RWPE1 (cell line): ENCODE measurements at regions of chr3 and their contacts with region 1.

Region 1: DNA sequence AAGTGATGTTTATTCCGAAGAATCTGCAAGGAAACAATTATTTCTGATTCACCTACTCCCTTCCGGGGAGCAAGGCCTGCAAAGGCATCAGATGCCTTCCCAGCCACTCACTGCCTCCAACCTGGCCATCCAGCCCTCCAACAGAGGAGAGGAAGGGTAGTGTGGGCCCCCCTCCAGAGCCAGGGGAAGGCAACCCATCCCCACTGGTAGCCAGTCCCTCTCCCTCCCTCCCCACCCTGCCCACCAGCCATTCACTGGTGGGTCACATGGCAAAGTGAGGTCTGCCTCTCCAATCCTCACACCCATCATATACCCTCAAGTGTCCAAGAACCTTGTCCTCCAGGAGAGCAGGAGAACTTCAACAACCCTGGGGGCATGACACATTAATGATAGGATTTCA is 2.4 kb upstream of the VIPR1 start:
- DNase-seq: no peak
- H3K27ac ChIP-seq: no peak overlapping the region
- CTCF ChIP-seq: no peak

Region 2: GRCh38 chr3:42403737-42404136 is 96.4 kb before region 1 on chr3:
- CTCF ChIA-PET with region 1: no interaction called
- POLR2A ChIA-PET with region 1: no interaction called
- DNase-seq: peak; percentile 19
- H3K27ac ChIP-seq: no peak overlapping the region
- CTCF ChIP-seq: no peak

Region 3: GRCh38 chr3:42468111-42468510 is 32.0 kb before region 1 on chr3:
- CTCF ChIA-PET with region 1: no interaction called
- POLR2A ChIA-PET with region 1: no interaction called
- DNase-seq: no peak
- H3K27ac ChIP-seq: no peak overlapping the region
- CTCF ChIP-seq: no peak

Region 4: GRCh38 chr3:42519568-42519962 is 19.5 kb after region 1 on chr3:
- CTCF ChIA-PET with region 1: no interaction called
- POLR2A ChIA-PET with region 1: no interaction called
- DNase-seq: no peak
- H3K27ac ChIP-seq: no peak overlapping the region
- CTCF ChIP-seq: no peak

Region 5: DNA sequence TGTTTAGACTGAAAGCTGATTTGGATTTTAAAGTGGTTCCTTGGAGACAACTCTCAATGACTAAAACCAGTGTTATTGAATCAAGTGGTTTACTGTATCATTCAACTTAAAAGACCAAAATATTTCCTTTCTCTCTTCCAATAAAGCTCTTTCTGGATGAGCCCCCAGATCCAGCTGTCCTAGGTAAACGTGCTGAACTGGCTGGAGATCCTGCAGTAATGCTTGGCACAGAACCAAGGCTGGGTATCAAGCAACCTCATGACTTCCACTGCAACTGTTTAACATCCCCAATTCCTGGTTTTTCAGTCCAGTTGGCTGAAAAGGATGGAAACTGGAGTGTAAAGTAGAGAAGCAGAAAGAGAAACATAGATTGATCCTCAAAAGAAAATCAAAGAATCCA is 52.7 kb after region 1 on chr3:
- CTCF ChIA-PET with region 1: interaction called, 10 read pairs
- POLR2A ChIA-PET with region 1: interaction called, 3 read pairs
- DNase-seq: no peak
- H3K27ac ChIP-seq: no peak overlapping the region
- CTCF ChIP-seq: no peak